H1 (cell line): ENCODE measurements at regions of chr22 and their contacts with region 1.

Region 1: DNA sequence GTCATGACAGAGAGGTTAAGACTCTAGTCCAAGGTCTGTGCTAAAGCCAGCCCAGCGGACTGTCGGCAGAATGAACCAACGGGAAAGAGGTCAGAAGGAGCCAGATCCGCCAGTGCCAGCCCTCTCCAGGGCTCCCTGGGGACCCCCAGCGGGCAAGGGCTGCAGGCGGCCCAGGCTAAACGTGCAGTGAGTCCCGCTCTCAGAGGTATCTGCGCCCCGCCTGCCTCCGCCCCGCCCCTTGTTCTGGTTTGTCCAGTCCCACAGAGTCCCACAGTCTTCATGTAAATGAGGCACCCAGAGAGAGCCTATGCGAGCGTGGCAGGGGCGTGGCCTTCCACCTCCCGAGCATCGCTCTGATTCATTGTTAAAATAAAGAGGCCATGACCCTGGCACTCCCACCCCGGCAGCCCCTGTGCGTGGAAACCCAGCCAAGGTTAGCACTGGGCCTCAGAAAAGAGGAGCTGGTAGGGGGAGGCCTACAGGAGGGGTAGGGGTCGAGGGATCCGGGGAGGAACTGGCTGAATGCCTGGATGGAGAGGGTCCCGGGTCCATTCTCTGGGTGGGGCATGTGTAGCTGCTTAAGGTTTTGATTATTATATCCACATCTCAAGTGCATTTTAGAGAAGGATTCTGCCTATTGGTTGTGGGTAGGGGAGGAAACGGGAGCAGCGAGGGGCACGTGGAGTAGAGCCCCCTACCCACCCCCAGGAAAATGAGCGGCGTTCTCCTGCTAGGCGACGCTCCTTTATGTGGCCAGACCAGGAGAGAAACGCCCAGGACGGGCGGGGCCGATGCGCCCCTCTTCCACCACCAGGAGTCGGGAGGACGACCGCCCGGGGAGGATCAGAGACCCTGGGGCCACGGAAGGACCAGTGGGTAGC is at the start of gene TRIOBP:
- DNase-seq: peak; percentile 92 to 97
- H3K4me3 ChIP-seq: peak within 1 kb of the TSS; percentile 52 to 76 (median 72)
- H3K27ac ChIP-seq: peak within 1 kb of the TSS; percentile 31
- H3K4me1 ChIP-seq: peaks cover 0 to 4% (median 0%) of the 10 kb centered on the region in 4 experiments; a peak in 2 of 7 replicates
- H3K27me3 ChIP-seq: no peaks in the 10 kb centered on the region
- CTCF ChIP-seq: peak; percentile 42 to 51 (median 49); a peak in 3 of 4 replicates
- EP300 ChIP-seq: no peak
- POLR2A ChIP-seq: peak in 1 of 2 experiments; percentile 58; a peak in 1 of 3 replicates
- RAD21 ChIP-seq: peak in 1 of 2 experiments; percentile 47; a peak in 1 of 4 replicates
- total RNA-seq, gene TRIOBP: 27.3 and 29.1 TPM in 2 replicates

Region 2: DNA sequence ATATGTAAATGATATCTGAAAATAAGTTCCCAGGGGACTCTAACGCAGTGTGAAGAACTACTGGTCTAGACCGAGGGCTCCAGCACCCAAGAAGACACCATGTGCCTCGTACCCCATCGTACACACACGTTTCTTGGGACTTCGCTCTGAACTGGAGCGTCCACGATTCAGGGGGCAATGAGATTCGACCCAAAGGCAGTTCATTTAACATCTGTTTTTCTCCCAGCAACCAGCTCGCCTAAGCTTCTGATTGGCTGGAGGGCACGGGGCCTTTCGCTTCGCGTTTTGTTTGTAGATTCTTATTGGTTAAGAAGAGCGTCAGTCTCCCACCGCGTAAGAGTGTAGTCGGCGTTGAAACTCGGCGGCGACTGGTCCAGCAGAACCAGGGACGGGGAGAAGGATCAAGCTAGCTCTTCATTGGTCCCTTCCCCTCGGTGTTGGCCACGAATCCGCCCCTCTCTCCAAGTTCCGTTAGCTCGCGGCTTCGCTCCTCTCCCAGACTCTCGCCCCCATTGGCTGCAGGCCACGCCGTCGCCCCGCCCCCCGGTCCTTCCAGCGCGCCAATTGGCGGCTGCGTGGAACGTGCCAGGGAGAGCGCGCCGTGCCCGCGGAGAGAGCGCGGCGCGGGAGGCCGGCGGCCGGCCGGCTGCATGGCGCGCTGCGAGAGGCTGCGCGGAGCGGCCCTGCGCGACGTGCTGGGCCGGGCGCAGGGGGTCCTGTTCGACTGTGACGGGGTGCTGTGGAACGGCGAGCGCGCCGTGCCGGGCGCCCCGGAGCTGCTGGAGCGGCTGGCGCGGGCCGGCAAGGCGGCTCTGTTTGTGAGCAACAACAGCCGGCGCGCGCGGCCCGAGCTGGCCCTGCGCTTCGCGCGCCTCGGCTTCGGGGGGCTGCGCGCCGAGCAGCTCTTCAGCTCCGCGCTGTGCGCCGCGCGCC is 38.5 kb before region 1 on chr22 and contains the start of gene PDXP:
- CTCF ChIA-PET with region 1: interaction called, 4 read pairs
- POLR2A ChIA-PET with region 1: interaction called, 17 read pairs
- DNase-seq: peak; percentile 98 to 99
- H3K4me3 ChIP-seq: peak within 1 kb of the TSS; percentile 71 to 94 (median 76)
- H3K27ac ChIP-seq: no peak within 1 kb of the TSS
- H3K4me1 ChIP-seq: peaks cover 0 to 21% (median 6%) of the 10 kb centered on the region in 4 experiments; a peak in 5 of 7 replicates
- H3K27me3 ChIP-seq: no peaks in the 10 kb centered on the region
- CTCF ChIP-seq: no peak
- EP300 ChIP-seq: no peak
- POLR2A ChIP-seq: peak in 1 of 2 experiments; percentile 63; a peak in 2 of 3 replicates
- RAD21 ChIP-seq: no peak
- total RNA-seq, gene PDXP: 35.7 and 36.6 TPM in 2 replicates

Region 3: GRCh38 chr22:37676736-37677492 is 20.0 kb before region 1 on chr22:
- CTCF ChIA-PET with region 1: interaction called, 14 read pairs
- POLR2A ChIA-PET with region 1: interaction called, 7 read pairs
- DNase-seq: peak; percentile 78 to 87
- H3K4me3 ChIP-seq: peak overlapping the region; percentile 28 to 63 (median 36)
- H3K27ac ChIP-seq: no peak overlapping the region
- H3K4me1 ChIP-seq: peaks cover 0 to 19% (median 13%) of the 10 kb centered on the region in 4 experiments; a peak in 6 of 7 replicates
- H3K27me3 ChIP-seq: peaks cover 0 to 2% (median 0%) of the 10 kb centered on the region in 4 experiments; a peak in 1 of 7 replicates
- CTCF ChIP-seq: no peak
- EP300 ChIP-seq: 0 out of 3 replicates have a peak, but pooled peaks of 1 of the 2 experiments have one; percentile 27
- POLR2A ChIP-seq: peak in 1 of 2 experiments; percentile 26; a peak in 1 of 3 replicates
- RAD21 ChIP-seq: no peak

Region 4: GRCh38 chr22:37686002-37686982 is 10.6 kb before region 1 on chr22 and contains the start of gene NOL12:
- CTCF ChIA-PET with region 1: interaction called, 14 read pairs
- POLR2A ChIA-PET with region 1: interaction called, 26 read pairs
- DNase-seq: peak; percentile 69 to 91
- H3K4me3 ChIP-seq: peak within 1 kb of the TSS; percentile 62 to 97 (median 87)
- H3K27ac ChIP-seq: peak within 1 kb of the TSS; percentile 88
- H3K4me1 ChIP-seq: peaks cover 0 to 6% (median 2%) of the 10 kb centered on the region in 4 experiments; a peak in 4 of 7 replicates
- H3K27me3 ChIP-seq: no peaks in the 10 kb centered on the region
- CTCF ChIP-seq: no peak
- EP300 ChIP-seq: no peak
- POLR2A ChIP-seq: peak in 1 of 2 experiments; percentile 88; a peak in 2 of 3 replicates
- RAD21 ChIP-seq: no peak
- total RNA-seq, gene NOL12: 26.7 and 28.3 TPM in 2 replicates

Region 5: GRCh38 chr22:37708580-37709444 is 11.9 kb after region 1 on chr22:
- CTCF ChIA-PET with region 1: interaction called, 8 read pairs
- POLR2A ChIA-PET with region 1: interaction called, 30 read pairs
- DNase-seq: no peak
- H3K4me3 ChIP-seq: no peak overlapping the region
- H3K27ac ChIP-seq: no peak overlapping the region
- H3K4me1 ChIP-seq: peaks cover 0 to 5% (median 0%) of the 10 kb centered on the region in 4 experiments; a peak in 1 of 7 replicates
- H3K27me3 ChIP-seq: no peaks in the 10 kb centered on the region
- CTCF ChIP-seq: no peak
- EP300 ChIP-seq: no peak
- POLR2A ChIP-seq: no peak
- RAD21 ChIP-seq: no peak